Activated naive CD4-positive, alpha-beta T cell treated with anti-CD3 and anti-CD28 coated beads for 36 hours (primary cell): ENCODE measurements at regions of chr9 and their contacts with region 1.

Region 1: GRCh38 chr9:34989003-34989945 is at the start of gene DNAJB5:
- DNase-seq: peak; percentile 99
- H3K4me3 Mint-ChIP-seq: peak within 1 kb of the TSS; percentile 90
- H3K27ac Mint-ChIP-seq: peak within 1 kb of the TSS; percentile 92
- H3K4me1 Mint-ChIP-seq: peaks cover 85% of the 10 kb centered on the region
- H3K27me3 Mint-ChIP-seq: no peaks in the 10 kb centered on the region
- total RNA-seq, gene DNAJB5: 11.4 to 12.0 TPM

Region 2: DNA sequence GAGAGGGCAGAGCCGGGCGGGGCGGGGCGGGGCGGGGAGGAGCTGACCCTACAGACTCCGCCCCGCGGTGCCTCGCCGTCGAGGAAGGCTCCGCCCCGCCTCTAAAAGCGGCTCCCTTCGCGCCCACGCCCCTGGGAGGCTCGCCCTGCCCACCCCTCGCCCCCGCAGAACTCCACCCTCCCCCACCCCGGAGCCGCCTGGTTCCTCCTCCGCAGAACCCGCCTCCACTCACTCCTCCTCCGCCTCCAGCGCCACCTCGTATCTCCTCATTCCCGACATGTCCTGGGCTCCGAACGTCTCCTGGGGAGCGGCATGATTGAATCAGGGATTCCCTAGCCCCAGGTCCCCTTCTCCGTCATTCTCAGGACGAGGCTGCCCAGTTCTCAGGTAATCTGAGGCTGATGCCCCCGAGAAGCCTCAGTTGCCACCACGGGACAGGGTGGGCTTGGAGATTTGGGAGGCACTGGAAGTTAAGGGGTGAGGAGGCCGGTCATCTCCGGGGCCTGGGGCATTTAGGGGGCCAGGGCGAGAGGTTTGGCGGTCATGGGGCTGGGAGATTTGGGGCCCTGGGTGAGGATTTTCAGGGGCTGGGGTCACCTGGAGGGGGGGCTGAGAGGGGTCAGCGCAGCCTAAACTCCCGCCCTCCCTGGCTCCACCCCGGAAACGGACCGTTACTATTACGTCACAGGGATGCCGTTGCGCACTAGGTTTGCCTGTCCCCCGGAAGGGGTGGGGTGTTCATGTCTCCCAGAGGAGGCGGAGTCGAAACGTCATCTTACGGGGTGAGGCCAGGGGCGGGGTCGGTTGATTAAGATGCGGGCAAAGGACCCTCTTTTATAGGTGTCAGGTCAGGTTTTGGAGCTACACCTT is 323.7 kb before region 1 on chr9:
- CTCF ChIA-PET with region 1: no interaction called
- intact Hi-C with region 1: loop called (anchors 5 kb)
- DNase-seq: peak; percentile 93
- H3K4me3 Mint-ChIP-seq: peak overlapping the region; percentile 77
- H3K27ac Mint-ChIP-seq: peak overlapping the region; percentile 80
- H3K4me1 Mint-ChIP-seq: peaks cover 39% of the 10 kb centered on the region
- H3K27me3 Mint-ChIP-seq: no peaks in the 10 kb centered on the region

Region 3: DNA sequence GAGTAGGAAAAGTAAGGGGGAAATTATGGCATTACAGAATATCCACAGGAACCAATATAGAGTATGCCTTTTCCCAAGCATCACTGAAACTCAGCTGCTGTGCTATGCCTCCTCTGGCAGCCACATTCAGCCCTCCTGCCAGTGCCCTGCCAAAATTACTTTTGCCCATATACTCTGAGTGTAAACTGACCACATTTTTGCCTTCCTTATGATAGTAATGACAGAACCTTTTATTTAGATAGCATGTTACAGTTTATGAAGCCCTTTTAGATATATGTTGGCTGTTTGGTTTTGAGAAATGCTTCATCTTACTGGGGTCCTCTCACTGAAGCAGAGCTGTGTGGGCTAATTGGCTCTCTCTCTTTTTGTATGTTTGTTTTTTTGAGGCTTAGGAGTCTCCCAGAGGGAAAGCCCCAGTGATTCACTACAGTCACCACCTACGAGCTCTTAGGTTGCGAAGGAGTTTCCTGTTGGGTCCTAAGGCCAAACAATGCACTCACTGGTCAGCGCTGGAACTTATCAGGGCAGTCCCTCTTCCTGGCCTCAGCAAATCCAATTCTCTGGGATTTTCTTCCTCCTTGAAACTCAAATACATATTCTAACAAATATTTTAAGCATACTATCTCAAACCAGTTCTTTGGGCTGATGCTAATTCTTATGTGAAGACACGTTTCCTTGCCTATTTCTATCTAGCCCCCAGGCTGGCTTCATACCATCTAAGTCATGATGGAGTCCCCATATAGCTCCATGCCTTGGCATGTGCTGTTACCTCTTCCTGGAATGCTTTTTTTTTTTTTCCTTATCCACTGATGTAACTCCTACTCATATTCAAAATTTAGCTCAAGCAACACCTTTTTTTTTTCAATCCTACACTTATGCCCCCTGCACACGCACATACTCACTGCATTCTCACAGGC is 27.4 kb before region 1 on chr9:
- CTCF ChIA-PET with region 1: interaction called, 17 read pairs
- intact Hi-C with region 1: loop called (anchors 1 kb)
- DNase-seq: peak; percentile 57
- H3K4me3 Mint-ChIP-seq: no peak overlapping the region
- H3K27ac Mint-ChIP-seq: no peak overlapping the region
- H3K4me1 Mint-ChIP-seq: peaks cover 25% of the 10 kb centered on the region
- H3K27me3 Mint-ChIP-seq: peaks cover 49% of the 10 kb centered on the region

Region 4: GRCh38 chr9:35071814-35072460 is 82.7 kb after region 1 on chr9:
- CTCF ChIA-PET with region 1: interaction called, 7 read pairs
- intact Hi-C with region 1: loop called (anchors 1 kb)
- DNase-seq: peak; percentile 77
- H3K4me3 Mint-ChIP-seq: peak overlapping the region; percentile 92
- H3K27ac Mint-ChIP-seq: peak overlapping the region; percentile 96
- H3K4me1 Mint-ChIP-seq: peaks cover 57% of the 10 kb centered on the region
- H3K27me3 Mint-ChIP-seq: no peaks in the 10 kb centered on the region

Region 5: GRCh38 chr9:35111001-35111933 is 122.0 kb after region 1 on chr9:
- CTCF ChIA-PET with region 1: no interaction called
- intact Hi-C with region 1: loop called (anchors 1 kb)
- DNase-seq: peak; percentile 97
- H3K4me3 Mint-ChIP-seq: peak overlapping the region; percentile 56
- H3K27ac Mint-ChIP-seq: peak overlapping the region; percentile 88
- H3K4me1 Mint-ChIP-seq: peaks cover 44% of the 10 kb centered on the region
- H3K27me3 Mint-ChIP-seq: no peaks in the 10 kb centered on the region

Region 6: GRCh38 chr9:35481347-35481975 is 492.2 kb after region 1 on chr9:
- CTCF ChIA-PET with region 1: no interaction called
- intact Hi-C with region 1: loop called (anchors 5 kb)
- DNase-seq: peak; percentile 57
- H3K4me3 Mint-ChIP-seq: no peak overlapping the region
- H3K27ac Mint-ChIP-seq: no peak overlapping the region
- H3K4me1 Mint-ChIP-seq: no peaks in the 10 kb centered on the region
- H3K27me3 Mint-ChIP-seq: peaks cover 6% of the 10 kb centered on the region